ENCODE measurements at regions of chr6 and their contacts with region 1.

Region 1: DNA sequence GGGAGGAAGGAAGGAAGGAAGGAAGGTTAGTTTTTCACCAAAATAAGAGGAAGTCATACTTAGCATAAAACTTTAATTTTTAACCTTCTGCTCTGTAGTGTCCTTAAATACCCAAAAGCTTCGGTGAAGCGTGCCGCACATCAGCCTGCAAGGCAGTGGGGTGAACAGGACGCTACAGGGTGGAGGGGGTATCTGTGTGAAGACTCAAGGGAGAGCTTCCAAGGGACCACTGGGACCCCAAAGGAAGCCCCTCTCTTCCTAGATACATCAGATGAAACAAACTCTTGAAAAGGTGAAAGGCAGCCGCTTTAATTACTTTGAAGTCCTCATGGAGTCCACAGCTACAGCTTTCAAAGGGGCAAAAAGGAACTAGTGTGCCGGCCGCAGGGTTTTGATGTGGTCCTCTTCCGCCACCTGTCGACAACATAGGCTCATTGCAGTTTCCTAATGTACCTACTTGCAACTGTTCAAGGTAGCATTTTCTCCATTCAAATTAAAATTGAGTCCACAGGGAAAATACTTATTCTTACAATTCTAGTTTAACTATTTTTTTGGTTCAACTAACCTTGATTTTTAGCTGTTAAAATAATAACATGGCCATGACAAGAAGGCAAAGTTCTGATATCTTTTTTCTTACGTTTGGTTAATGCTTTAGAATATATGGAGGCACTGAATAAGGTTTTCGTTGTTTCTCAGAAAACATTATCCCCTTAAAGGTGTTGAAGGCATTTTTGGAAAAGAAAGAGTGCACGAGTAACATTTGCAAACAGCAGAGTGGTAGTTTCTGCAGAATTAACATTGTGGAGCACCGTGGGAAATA is 135.0 kb upstream of the RIPOR2 start:
- DNase-seq: peak; percentile 73 to 78 (median 76)
- ATAC-seq: peak in 3 of 4 donors; percentile 87 to 88 (median 87)
- H3K4me3 ChIP-seq: peak overlapping the region in 1 of 12 donors; percentile 20
- H3K27ac ChIP-seq: peak overlapping the region in 3 of 12 donors; percentile 31 to 58 (median 42)
- H3K4me1 ChIP-seq: peaks cover 0 to 6% (median 0%) of the 10 kb centered on the region in 12 donors
- H3K27me3 ChIP-seq: no peaks in the 10 kb centered on the region
- CTCF ChIP-seq: peak; percentile 87 to 96 (median 94)
- POLR2A ChIP-seq: no peak

Region 2: DNA sequence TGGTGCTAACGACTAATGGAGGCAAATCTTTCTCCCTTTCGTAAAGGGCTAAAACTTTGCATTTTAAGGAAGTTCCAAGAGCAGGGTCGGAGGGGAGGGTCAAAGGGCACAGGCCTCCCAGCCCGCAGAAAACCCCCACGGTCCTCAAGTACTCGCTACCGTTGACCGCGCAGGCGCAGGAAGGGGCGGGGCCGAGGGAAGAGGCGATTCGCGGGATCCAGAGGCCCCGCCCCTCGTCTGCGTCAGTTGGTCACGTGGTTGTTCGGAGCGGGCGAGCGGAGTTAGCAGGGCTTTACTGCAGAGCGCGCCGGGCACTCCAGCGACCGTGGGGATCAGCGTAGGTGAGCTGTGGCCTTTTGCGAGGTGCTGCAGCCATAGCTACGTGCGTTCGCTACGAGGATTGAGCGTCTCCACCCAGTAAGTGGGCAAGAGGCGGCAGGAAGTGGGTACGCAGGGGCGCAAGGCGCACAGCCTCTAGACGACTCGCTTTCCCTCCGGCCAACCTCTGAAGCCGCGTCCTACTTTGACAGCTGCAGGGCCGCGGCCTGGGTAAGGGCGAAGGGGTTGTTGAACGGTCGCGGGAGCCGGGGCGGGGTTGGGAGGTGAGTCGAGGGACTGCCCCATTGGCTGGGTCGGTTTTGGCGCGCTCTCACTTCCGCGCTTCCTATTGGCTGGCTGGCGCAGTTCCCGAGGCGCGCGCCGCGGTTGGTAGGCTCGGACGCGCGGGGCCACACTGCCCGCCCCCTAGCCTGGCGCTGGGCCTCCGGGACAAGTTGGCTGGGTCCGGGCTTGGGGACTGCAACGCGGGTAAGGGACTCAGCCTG is 295.8 kb before region 1 on chr6 and contains the start of gene GMNN:
- intact Hi-C with region 1: loop called in 1 of 10 experiments (anchors 5 kb)
- DNase-seq: peak; percentile 99 to 100 (median 99)
- ATAC-seq: peak; percentile 98 to 99 (median 99)
- H3K4me3 ChIP-seq: peak within 1 kb of the TSS; percentile 42 to 100 (median 96)
- H3K27ac ChIP-seq: peak within 1 kb of the TSS; percentile 57 to 99 (median 93)
- H3K4me1 ChIP-seq: peaks cover 0 to 36% (median 14%) of the 10 kb centered on the region in 12 donors
- H3K27me3 ChIP-seq: no peaks in the 10 kb centered on the region
- CTCF ChIP-seq: peak in 1 of 12 donors; percentile 8
- POLR2A ChIP-seq: peak in 1 of 2 donors; percentile 63
- total RNA-seq, gene GMNN: 4.5 to 12.9 (median 6.8) TPM

Measured in heart left ventricle (tissue), 16 donors.